Natural killer cell (primary cell): ENCODE measurements at regions of chr10 and their contacts with region 1.

Region 1: DNA sequence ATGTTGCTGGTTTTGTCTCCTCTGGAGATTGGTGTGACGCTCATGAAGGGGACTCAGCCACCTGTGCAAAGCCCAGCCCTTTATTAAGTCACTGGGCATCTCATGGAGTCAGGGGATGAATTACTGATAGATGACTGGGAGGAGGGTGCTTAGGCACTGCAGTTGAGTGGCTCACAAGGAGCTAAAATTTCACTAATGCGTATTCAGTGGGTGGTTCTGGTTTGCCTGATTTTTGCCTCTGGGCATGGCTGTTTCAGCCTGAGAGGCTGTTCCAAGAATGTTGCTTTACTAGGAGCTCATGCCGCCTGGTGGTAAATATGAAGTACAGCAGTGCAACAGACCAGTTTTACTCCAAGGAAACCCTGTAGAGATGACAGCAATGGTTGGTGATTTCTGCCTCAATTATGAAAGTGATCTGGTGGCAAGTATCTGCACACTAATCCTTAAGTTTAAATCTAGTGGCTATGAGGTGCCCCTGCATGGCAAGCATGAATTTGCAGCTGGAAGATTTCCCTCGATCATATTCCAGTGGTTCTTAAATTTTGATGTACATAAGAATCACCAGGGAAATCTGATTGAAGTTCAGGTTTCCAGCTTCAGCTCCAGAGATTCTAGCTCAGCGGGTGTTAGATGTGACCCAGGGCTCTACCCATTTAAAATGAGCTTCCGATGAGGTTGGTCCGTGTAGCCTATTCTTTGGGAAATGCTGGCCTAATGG is 19.9 kb downstream of the ACTA2 start:
- DNase-seq: peak in 1 of 2 donors; percentile 74
- ATAC-seq: peak; percentile 71 to 78 (median 74)
- H3K4me3 ChIP-seq: no peak overlapping the region
- H3K4me3 Mint-ChIP-seq: no peak overlapping the region
- H3K27ac ChIP-seq: no peak overlapping the region
- H3K27ac Mint-ChIP-seq: peak overlapping the region in 1 of 2 donors; percentile 13
- H3K4me1 ChIP-seq: peaks cover 9% of the 10 kb centered on the region
- H3K4me1 Mint-ChIP-seq: peaks cover 12 to 16% of the 10 kb centered on the region in 2 donors
- H3K27me3 ChIP-seq: no peaks in the 10 kb centered on the region
- H3K27me3 Mint-ChIP-seq: no peaks in the 10 kb centered on the region
- CTCF ChIP-seq: peak; percentile 73

Region 2: DNA sequence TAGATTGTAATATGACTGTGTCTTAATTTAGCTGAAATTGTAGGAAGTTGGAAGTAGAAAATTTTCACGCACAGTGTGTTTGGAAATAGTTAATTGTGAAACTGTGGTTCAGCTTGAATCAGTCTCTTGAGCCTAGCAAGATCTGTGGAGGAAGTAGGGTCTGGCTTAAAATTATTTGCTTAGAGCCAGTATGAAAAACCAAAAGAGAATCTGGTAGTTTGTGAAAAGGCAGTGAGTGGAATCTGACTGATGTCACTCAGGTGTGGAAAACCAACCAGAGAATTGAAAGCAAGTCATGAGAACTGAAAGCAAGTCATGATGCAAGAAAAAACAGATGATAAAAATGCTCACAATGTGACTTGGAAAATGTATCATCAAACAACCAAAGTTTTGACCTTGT is 334.6 kb before region 1 on chr10:
- intact Hi-C with region 1: no loop called
- DNase-seq: no peak
- ATAC-seq: no peak
- H3K4me3 ChIP-seq: no peak overlapping the region
- H3K4me3 Mint-ChIP-seq: no peak overlapping the region
- H3K27ac ChIP-seq: no peak overlapping the region
- H3K27ac Mint-ChIP-seq: no peak overlapping the region
- H3K4me1 ChIP-seq: no peaks in the 10 kb centered on the region
- H3K4me1 Mint-ChIP-seq: no peaks in the 10 kb centered on the region
- H3K27me3 ChIP-seq: no peaks in the 10 kb centered on the region
- H3K27me3 Mint-ChIP-seq: peaks cover 4 to 7% of the 10 kb centered on the region in 2 donors
- CTCF ChIP-seq: no peak

Region 3: DNA sequence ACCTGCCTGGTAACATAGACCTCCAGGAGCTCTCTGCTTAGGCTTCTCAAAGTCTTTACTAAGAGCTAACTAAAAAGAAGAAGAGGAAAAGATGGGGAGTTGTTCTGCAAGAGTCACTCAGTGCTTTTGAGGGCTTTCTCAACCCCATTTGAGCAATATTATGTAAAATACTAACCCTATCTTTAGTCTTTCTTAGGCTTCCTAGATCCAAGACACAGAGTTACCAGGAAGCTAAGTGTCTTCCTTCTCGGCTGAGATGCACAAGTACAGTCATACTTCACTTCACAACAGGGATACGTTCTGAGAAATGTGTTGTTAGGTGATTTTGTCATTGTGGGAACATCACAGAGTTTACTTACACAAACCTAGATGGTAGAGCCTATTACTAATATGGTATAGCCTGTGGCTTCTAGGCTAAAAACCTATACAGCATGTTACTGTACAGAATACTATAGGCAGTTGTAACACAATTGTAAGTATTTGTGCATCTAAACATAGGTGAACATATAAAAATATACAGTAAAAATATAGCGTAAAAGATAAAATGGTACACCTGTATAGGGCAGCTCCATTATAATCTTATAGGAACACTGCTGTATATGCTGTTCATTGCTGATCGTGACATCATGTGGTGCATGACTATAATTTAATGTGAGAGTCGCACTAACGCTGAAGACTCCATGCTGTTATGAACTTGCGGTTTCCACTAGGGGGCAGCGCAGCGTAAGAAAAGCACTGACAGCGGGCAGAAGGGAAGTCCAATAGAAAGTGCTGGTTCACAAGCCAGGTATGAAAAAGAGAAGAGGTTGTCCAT is 97.4 kb before region 1 on chr10:
- intact Hi-C with region 1: loop called (anchors 1 kb)
- DNase-seq: peak; percentile 76 to 94
- ATAC-seq: peak; percentile 94 to 97 (median 96)
- H3K4me3 ChIP-seq: no peak overlapping the region
- H3K4me3 Mint-ChIP-seq: no peak overlapping the region
- H3K27ac ChIP-seq: no peak overlapping the region
- H3K27ac Mint-ChIP-seq: no peak overlapping the region
- H3K4me1 ChIP-seq: peaks cover 5% of the 10 kb centered on the region
- H3K4me1 Mint-ChIP-seq: peaks cover 28 to 30% of the 10 kb centered on the region in 2 donors
- H3K27me3 ChIP-seq: no peaks in the 10 kb centered on the region
- H3K27me3 Mint-ChIP-seq: no peaks in the 10 kb centered on the region
- CTCF ChIP-seq: peak; percentile 94

Region 4: GRCh38 chr10:88880282-88881076 is 52.2 kb before region 1 on chr10:
- intact Hi-C with region 1: loop called (anchors 5 kb)
- DNase-seq: peak; percentile 69 to 84
- ATAC-seq: peak; percentile 75 to 91 (median 80)
- H3K4me3 ChIP-seq: peak overlapping the region; percentile 89
- H3K4me3 Mint-ChIP-seq: peak overlapping the region; percentile 98
- H3K27ac ChIP-seq: peak overlapping the region; percentile 93
- H3K27ac Mint-ChIP-seq: peak overlapping the region; percentile 88 to 97
- H3K4me1 ChIP-seq: peaks cover 14% of the 10 kb centered on the region
- H3K4me1 Mint-ChIP-seq: peaks cover 50 to 59% of the 10 kb centered on the region in 2 donors
- H3K27me3 ChIP-seq: no peaks in the 10 kb centered on the region
- H3K27me3 Mint-ChIP-seq: peaks cover 0 to 4% of the 10 kb centered on the region in 2 donors
- CTCF ChIP-seq: no peak

Region 5: GRCh38 chr10:88952647-88953111 is 20.0 kb after region 1 on chr10 and contains the start of gene ACTA2:
- intact Hi-C with region 1: no loop called
- DNase-seq: no peak
- ATAC-seq: no peak
- H3K4me3 ChIP-seq: no peak within 1 kb of the TSS
- H3K4me3 Mint-ChIP-seq: no peak within 1 kb of the TSS
- H3K27ac ChIP-seq: no peak within 1 kb of the TSS
- H3K27ac Mint-ChIP-seq: no peak within 1 kb of the TSS
- H3K4me1 ChIP-seq: no peaks in the 10 kb centered on the region
- H3K4me1 Mint-ChIP-seq: peaks cover 0 to 6% of the 10 kb centered on the region in 2 donors
- H3K27me3 ChIP-seq: no peaks in the 10 kb centered on the region
- H3K27me3 Mint-ChIP-seq: no peaks in the 10 kb centered on the region
- CTCF ChIP-seq: no peak
- total RNA-seq, gene ACTA2: 5.0 to 13.1 (median 7.4) TPM

Region 6: GRCh38 chr10:88990384-88991160 is 57.9 kb after region 1 on chr10 and contains the start of gene FAS:
- intact Hi-C with region 1: loop called (anchors 1 kb)
- DNase-seq: peak; percentile 58 to 95
- ATAC-seq: peak; percentile 63 to 81 (median 70)
- H3K4me3 ChIP-seq: peak within 1 kb of the TSS; percentile 94
- H3K4me3 Mint-ChIP-seq: peak within 1 kb of the TSS; percentile 97
- H3K27ac ChIP-seq: peak within 1 kb of the TSS; percentile 80
- H3K27ac Mint-ChIP-seq: peak within 1 kb of the TSS; percentile 95 to 96
- H3K4me1 ChIP-seq: peaks cover 21% of the 10 kb centered on the region
- H3K4me1 Mint-ChIP-seq: peaks cover 54 to 59% of the 10 kb centered on the region in 2 donors
- H3K27me3 ChIP-seq: no peaks in the 10 kb centered on the region
- H3K27me3 Mint-ChIP-seq: no peaks in the 10 kb centered on the region
- CTCF ChIP-seq: no peak
- total RNA-seq, gene FAS: 17.3 to 29.9 (median 26.5) TPM

Region 7: GRCh38 chr10:89217057-89217990 is 284.6 kb after region 1 on chr10:
- intact Hi-C with region 1: loop called (anchors 1 kb)
- DNase-seq: peak; percentile 45 to 81
- ATAC-seq: peak; percentile 51 to 67 (median 63)
- H3K4me3 ChIP-seq: no peak overlapping the region
- H3K4me3 Mint-ChIP-seq: no peak overlapping the region
- H3K27ac ChIP-seq: peak overlapping the region; percentile 26
- H3K27ac Mint-ChIP-seq: peak overlapping the region in 1 of 2 donors; percentile 70
- H3K4me1 ChIP-seq: no peaks in the 10 kb centered on the region
- H3K4me1 Mint-ChIP-seq: peaks cover 10 to 14% of the 10 kb centered on the region in 2 donors
- H3K27me3 ChIP-seq: no peaks in the 10 kb centered on the region
- H3K27me3 Mint-ChIP-seq: no peaks in the 10 kb centered on the region
- CTCF ChIP-seq: peak; percentile 74